ENCODE measurements at regions of chr19 and their contacts with region 1.

Region 1: GRCh38 chr19:2702162-2703076 is at the start of gene GNG7:
- DNase-seq: peak in 1 of 2 experiments; percentile 96
- H3K4me3 ChIP-seq: peak within 1 kb of the TSS; percentile 59 to 89 (median 72)
- H3K27ac ChIP-seq: no peak within 1 kb of the TSS
- H3K4me1 ChIP-seq: peaks cover 3 to 8% (median 5%) of the 10 kb centered on the region in 4 experiments
- H3K27me3 ChIP-seq: peaks cover 0 to 20% (median 17%) of the 10 kb centered on the region in 4 experiments; a peak in 6 of 7 replicates
- CTCF ChIP-seq: no peak
- EP300 ChIP-seq: no peak
- POLR2A ChIP-seq: peak in 1 of 2 experiments; percentile 43; a peak in 1 of 3 replicates
- RAD21 ChIP-seq: no peak
- total RNA-seq, gene GNG7: 7.0 and 7.8 TPM in 2 replicates

Region 2: DNA sequence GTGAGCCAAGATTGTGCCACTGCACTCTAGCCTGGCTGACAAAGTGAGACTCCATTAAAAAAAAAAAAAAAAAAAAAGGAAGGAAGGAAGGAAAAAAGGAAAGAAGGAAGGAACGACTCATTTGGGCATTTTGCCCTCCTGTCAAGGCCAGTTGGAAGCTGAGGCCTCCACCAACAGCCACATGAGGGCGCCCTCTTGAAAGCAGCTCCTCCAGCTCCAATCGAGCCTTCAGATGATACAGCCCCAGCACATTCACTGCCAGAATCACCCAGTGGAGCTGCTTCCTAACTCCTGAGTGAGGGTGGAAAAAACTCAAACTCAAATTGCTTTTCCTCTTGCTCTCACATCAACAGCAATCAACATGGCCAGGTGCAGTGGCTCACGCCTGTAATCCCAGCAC is 40.8 kb before region 1 on chr19:
- CTCF ChIA-PET with region 1: interaction called, 11 read pairs
- POLR2A ChIA-PET with region 1: no interaction called
- DNase-seq: no peak
- H3K4me3 ChIP-seq: no peak overlapping the region
- H3K27ac ChIP-seq: no peak overlapping the region
- H3K4me1 ChIP-seq: no peaks in the 10 kb centered on the region
- H3K27me3 ChIP-seq: no peaks in the 10 kb centered on the region; a peak in 1 of 7 replicates
- CTCF ChIP-seq: peak; percentile 31 to 67 (median 61); a peak in 3 of 4 replicates
- EP300 ChIP-seq: no peak
- POLR2A ChIP-seq: no peak
- RAD21 ChIP-seq: peak; percentile 46 to 57